MCF 10A (cell line): ENCODE measurements at regions of chr14 and their contacts with region 1.

Region 1: DNA sequence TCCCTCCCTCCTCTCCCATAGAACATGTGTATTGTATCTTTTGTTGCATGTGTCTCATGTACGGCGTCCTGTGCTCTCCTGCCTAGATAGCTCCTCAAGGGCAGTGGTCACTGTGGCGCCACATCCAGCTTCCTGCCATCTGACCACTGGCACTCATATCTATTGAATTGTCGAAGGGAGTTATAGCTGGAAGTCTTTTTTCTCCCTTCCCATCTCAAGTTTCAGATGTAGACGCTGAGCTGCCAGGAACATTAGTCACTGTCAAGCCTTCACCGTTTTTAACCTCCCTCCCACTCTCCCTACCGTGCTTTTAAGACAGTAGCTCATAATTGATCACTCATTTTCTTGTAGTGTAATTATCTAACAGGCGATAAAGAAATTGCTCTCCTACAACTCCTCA is 33.0 kb downstream of the MTHFD1 start:
- DNase-seq: peak; percentile 62
- H3K4me3 Mint-ChIP-seq: no peak overlapping the region
- H3K27ac Mint-ChIP-seq: no peak overlapping the region
- H3K4me1 Mint-ChIP-seq: peaks cover 12% of the 10 kb centered on the region
- H3K27me3 Mint-ChIP-seq: no peaks in the 10 kb centered on the region
- CTCF ChIP-seq: no peak

Region 2: DNA sequence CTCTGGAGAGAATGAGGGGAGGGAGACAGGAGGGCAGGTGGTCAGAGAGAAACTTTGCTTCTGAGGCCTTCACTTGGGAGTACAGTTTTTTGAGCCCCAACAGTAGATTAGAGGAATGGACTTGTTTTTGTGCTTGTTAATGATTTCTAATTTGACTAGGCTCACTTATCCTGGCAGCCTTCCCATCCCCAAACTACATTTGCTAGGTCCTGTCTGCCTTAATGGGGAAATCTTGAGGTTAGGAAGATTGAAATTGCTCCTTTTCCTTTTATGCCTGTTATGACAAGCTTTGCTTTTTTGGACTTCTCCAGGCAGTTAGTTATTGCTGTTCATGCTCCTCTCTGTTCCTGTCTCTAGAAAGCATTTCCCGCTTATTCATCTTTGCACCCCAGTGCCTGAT is 530.6 kb before region 1 on chr14:
- CTCF ChIA-PET with region 1: no interaction called
- POLR2A ChIA-PET with region 1: no interaction called
- intact Hi-C with region 1: no loop called
- DNase-seq: no peak
- H3K4me3 Mint-ChIP-seq: no peak overlapping the region
- H3K27ac Mint-ChIP-seq: no peak overlapping the region
- H3K4me1 Mint-ChIP-seq: peaks cover 14% of the 10 kb centered on the region
- H3K27me3 Mint-ChIP-seq: no peaks in the 10 kb centered on the region
- CTCF ChIP-seq: no peak

Region 3: DNA sequence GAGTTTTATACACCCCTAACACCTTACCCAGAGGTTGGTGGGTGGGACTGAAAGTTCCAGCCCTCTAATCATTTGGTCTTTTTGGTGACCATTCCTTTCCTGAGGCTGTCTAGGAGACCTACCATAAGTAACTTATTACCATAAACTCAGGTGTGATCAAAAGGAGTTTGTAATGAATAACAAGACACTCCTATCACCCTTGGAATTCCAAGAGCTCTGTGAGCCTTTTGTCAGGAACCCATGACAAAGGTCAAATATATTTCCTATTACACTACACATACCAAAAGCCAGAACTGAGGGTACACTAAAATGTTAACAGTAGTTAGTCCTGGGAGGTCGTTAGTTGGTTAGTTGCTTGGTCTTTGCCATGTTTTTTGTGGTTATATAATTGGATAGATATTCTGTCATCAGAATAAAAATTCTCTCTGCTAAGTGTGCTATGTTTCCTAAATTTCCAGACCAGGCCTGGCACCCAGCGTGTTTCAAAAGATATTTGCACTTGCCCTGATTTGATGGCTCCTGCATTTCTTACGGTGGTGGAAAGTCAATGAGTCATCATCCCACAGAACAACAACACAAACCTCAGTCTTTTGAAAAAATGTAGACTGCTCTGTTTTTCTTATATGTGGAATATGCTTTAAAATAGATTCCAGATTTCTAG is 17.1 kb after region 1 on chr14:
- CTCF ChIA-PET with region 1: interaction called, 63 read pairs
- POLR2A ChIA-PET with region 1: interaction called, 3 read pairs
- intact Hi-C with region 1: no loop called
- DNase-seq: peak; percentile 63
- H3K4me3 Mint-ChIP-seq: no peak overlapping the region
- H3K27ac Mint-ChIP-seq: peak overlapping the region; percentile 81
- H3K4me1 Mint-ChIP-seq: peaks cover 17% of the 10 kb centered on the region
- H3K27me3 Mint-ChIP-seq: no peaks in the 10 kb centered on the region
- CTCF ChIP-seq: no peak

Region 4: DNA sequence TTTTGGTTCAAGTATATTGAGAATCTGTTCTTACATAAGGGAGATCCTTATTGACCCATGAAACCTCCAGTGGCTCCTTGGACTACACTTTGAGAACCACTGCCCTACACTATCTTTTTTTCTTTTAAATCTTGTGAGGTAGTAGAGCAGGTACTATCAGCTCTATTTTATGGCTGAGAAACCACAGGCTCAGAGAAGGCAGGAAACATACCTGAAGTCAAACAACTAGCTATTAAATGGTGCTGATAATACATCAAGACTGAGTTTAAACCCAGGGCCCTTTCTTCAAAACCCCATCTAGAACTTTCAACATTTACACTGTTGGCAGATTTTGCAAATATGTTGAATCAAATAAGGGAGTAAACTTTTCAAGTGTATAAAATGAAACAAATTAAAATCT is 75.6 kb after region 1 on chr14:
- CTCF ChIA-PET with region 1: no interaction called
- POLR2A ChIA-PET with region 1: no interaction called
- intact Hi-C with region 1: no loop called
- DNase-seq: no peak
- H3K4me3 Mint-ChIP-seq: no peak overlapping the region
- H3K27ac Mint-ChIP-seq: no peak overlapping the region
- H3K4me1 Mint-ChIP-seq: peaks cover 13% of the 10 kb centered on the region
- H3K27me3 Mint-ChIP-seq: no peaks in the 10 kb centered on the region
- CTCF ChIP-seq: no peak